ENCODE measurements at regions of chr19 and their contacts with region 1.

Region 1: GRCh38 chr19:19203012-19203856 is at the start of gene NR2C2AP:
- DNase-seq: peak; percentile 93
- H3K4me3 Mint-ChIP-seq: peak within 1 kb of the TSS; percentile 85
- H3K27ac Mint-ChIP-seq: peak within 1 kb of the TSS; percentile 88
- H3K4me1 Mint-ChIP-seq: peaks cover 13% of the 10 kb centered on the region
- H3K27me3 Mint-ChIP-seq: no peaks in the 10 kb centered on the region
- CTCF ChIP-seq: no peak
- total RNA-seq, gene NR2C2AP: 13.4 and 20.6 TPM in 2 replicates

Region 2: GRCh38 chr19:19192078-19192882 is 11.0 kb before region 1 on chr19 and contains the starts of genes BORCS8 and RFXANK:
- CTCF ChIA-PET with region 1: interaction called, 6 read pairs
- POLR2A ChIA-PET with region 1: interaction called, 64 read pairs
- intact Hi-C with region 1: no loop called
- DNase-seq: peak; percentile 100
- H3K4me3 Mint-ChIP-seq: peak within 1 kb of the TSS; percentile 94
- H3K27ac Mint-ChIP-seq: peak within 1 kb of the TSS; percentile 99
- H3K4me1 Mint-ChIP-seq: peaks cover 13% of the 10 kb centered on the region
- H3K27me3 Mint-ChIP-seq: no peaks in the 10 kb centered on the region
- CTCF ChIP-seq: no peak
- total RNA-seq, gene BORCS8: 25.4 and 26.3 TPM in 2 replicates
- total RNA-seq, gene RFXANK: 115 and 118 TPM in 2 replicates

Measured in MCF 10A (cell line).